Activated CD4-positive, alpha-beta T cell treated with anti-CD3 and anti-CD28 coated beads for 36 hours (primary cell): ENCODE measurements at regions of chr12 and their contacts with region 1.

Region 1: GRCh38 chr12:6752921-6753771 is at the start of gene MLF2:
- DNase-seq: peak; percentile 99
- ATAC-seq: peak; percentile 96
- H3K4me3 Mint-ChIP-seq: peak within 1 kb of the TSS; percentile 87
- H3K27ac Mint-ChIP-seq: peak within 1 kb of the TSS; percentile 97
- H3K4me1 Mint-ChIP-seq: peaks cover 26% of the 10 kb centered on the region
- H3K27me3 Mint-ChIP-seq: no peaks in the 10 kb centered on the region
- total RNA-seq, gene MLF2: 142 to 144 TPM

Region 2: DNA sequence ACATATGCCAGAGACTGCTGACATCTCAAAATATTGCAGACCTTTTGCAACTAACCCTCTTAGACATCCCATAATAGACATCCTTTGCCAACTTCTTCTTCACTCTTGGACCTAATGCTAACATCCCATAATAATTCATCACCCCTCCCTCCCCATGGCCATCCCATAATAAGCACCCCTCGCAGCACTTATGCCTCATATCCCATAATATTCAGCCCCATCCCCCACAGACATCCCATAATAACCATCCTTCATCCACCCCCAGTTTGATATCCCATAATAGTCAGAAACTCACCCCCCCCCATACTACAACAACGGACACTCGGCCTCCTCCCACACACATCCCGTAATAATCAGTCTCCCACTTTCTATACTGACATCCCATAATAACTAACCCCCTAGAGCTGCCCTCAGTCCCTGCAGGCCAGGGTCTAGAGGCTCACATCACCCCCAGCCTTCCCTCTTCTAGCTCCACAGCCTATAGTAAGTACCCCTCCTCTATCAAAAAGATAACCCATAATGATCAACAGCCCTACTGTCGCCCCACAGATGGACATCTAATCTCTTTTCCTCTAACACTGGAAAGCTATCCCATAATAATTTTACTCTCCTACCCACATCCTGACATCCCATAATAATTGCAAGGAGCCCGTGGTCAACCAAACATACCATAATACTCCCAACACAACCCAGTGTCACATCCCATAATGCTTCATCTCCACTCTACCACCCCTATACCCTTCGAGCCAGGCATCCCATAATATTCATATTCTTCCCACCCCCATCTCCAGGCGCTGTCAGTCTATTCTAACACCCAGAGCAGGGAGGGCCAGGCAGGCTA is 145.2 kb before region 1 on chr12:
- CTCF ChIA-PET with region 1: no interaction called
- POLR2A ChIA-PET with region 1: no interaction called
- intact Hi-C with region 1: loop called in 1 of 2 experiments (anchors 1 kb)
- DNase-seq: peak; percentile 84
- ATAC-seq: peak; percentile 60
- H3K4me3 Mint-ChIP-seq: no peak overlapping the region
- H3K27ac Mint-ChIP-seq: no peak overlapping the region
- H3K4me1 Mint-ChIP-seq: peaks cover 52% of the 10 kb centered on the region
- H3K27me3 Mint-ChIP-seq: no peaks in the 10 kb centered on the region

Region 3: DNA sequence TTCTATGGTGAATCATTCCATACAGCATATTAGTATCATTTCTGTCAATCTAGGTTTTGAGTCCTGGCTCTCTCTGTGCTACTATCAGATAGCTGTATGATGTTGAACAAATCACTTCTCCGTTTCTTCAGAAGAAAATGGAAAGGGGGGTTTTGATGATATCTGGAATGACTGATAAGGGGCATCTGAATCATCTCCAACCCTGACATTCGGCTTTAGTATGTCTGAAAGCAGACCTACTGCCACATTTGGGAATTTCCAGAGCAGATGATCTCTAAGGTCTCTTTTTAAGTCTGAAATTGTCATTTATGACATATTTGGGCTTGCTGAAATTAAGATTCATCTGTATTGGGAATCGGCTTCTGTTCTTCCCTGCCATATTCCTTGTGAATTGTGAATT is 10.3 kb before region 1 on chr12:
- CTCF ChIA-PET with region 1: interaction called, 19 read pairs
- POLR2A ChIA-PET with region 1: interaction called, 6 read pairs
- intact Hi-C with region 1: no loop called
- DNase-seq: no peak
- ATAC-seq: peak; percentile 60
- H3K4me3 Mint-ChIP-seq: no peak overlapping the region
- H3K27ac Mint-ChIP-seq: peak overlapping the region; percentile 77
- H3K4me1 Mint-ChIP-seq: peaks cover 42% of the 10 kb centered on the region
- H3K27me3 Mint-ChIP-seq: no peaks in the 10 kb centered on the region

Region 4: GRCh38 chr12:6778574-6779550 is 25.7 kb after region 1 on chr12:
- CTCF ChIA-PET with region 1: interaction called, 29 read pairs
- POLR2A ChIA-PET with region 1: interaction called, 4 read pairs
- intact Hi-C with region 1: loop called (anchors 1 kb)
- DNase-seq: peak; percentile 95
- ATAC-seq: peak; percentile 59
- H3K4me3 Mint-ChIP-seq: peak overlapping the region; percentile 72
- H3K27ac Mint-ChIP-seq: peak overlapping the region; percentile 84
- H3K4me1 Mint-ChIP-seq: peaks cover 91% of the 10 kb centered on the region
- H3K27me3 Mint-ChIP-seq: peaks cover 5% of the 10 kb centered on the region

Region 5: DNA sequence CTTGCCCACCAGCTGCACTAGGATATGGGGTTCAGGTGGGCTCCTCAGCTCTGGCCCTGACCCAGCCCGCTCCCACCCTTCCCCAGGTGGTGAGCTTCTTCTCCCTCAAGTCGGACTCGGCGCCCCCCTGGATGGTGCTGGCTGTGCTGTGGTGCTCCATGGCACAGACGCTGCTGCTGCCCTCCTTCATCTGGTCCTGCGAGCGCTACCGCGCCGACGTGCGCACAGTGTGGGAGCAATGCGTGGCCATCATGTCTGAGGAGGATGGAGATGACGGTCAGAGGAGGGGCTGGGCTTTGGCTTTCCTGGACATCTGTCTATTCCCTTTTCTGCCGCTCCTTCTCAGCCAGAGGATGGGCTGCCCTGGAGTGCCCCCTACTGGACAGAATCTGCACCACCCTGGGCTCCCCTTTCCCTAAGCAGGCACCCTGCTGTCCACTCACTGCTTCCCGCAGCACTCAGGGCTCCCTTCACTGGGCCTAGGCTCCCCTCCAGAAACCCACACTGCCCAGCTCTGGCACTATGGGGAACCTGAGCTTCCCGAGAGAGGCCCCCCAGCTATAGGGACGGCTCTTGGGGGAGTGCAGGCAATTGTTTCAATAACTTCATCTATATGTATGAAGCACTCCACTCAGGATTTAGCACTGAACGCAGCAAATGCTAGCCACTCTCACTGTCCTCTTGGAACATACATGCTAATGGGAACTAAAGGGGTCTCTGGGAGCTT is 72.4 kb after region 1 on chr12:
- CTCF ChIA-PET with region 1: interaction called, 54 read pairs
- POLR2A ChIA-PET with region 1: no interaction called
- intact Hi-C with region 1: loop called (anchors 1 kb)
- DNase-seq: peak; percentile 91
- ATAC-seq: peak; percentile 64
- H3K4me3 Mint-ChIP-seq: no peak overlapping the region
- H3K27ac Mint-ChIP-seq: peak overlapping the region; percentile 16
- H3K4me1 Mint-ChIP-seq: peaks cover 36% of the 10 kb centered on the region
- H3K27me3 Mint-ChIP-seq: peaks cover 32% of the 10 kb centered on the region

Region 6: DNA sequence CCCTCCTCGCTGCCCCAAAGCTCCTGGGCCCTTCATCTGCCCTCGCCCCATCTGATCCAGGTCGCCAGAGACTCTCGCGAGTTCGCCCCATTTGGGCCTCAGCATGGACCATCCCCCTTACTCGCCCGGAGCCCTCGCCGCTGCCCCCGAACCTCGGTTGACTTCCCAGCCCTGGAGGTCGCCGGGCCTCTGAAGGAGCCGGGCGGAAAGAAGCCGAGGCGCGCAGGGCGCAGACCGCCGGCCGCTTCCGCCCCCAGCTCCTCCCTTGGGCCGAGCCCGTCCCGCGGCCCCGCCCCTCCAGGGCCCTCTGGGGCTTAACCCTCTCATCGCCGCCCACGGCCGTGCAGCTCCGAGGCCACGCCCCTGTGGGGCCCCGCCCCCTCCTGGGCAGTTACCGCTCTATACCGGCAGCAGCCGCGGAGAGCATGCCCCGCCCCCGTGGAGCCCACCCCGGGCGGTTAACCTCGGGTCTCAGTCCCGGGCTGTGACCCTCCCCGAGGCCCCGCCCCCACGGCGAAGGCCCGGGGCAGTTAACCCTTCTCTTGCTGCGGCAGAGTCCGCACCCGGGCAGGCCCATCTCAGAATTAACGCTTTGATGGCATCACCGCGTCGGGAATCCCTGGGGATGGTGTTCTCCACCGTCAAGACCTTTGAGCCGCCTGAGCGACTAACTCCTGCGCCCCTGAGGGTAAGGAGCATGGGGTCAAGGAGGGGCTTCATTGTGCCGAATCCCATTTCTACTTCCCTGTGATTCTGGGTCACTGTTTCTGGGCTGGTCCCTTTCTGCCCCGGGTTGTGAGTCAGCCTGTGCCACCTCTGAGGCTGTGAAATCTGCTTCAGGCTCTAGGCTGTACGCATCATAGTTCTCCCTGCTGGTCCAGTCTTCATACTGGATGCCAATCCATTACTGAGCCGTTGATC is 120.2 kb after region 1 on chr12 and contains the start of gene SPSB2:
- CTCF ChIA-PET with region 1: interaction called, 10 read pairs
- POLR2A ChIA-PET with region 1: no interaction called
- intact Hi-C with region 1: loop called in 1 of 2 experiments (anchors 1 kb)
- DNase-seq: peak; percentile 100
- ATAC-seq: peak; percentile 74
- H3K4me3 Mint-ChIP-seq: peak within 1 kb of the TSS; percentile 93
- H3K27ac Mint-ChIP-seq: peak within 1 kb of the TSS; percentile 86
- H3K4me1 Mint-ChIP-seq: peaks cover 50% of the 10 kb centered on the region
- H3K27me3 Mint-ChIP-seq: no peaks in the 10 kb centered on the region
- total RNA-seq, gene SPSB2: 1.7 to 2.2 TPM